Activated T-helper 2 cell treated with anti-CD3 and anti-CD28 coated beads, Interferon-gamma antibody, Interleukin-2, Interleukin-4, amounts not matched to agents 10 μg/mL and 5 μg/mL and 100 μg/mL, durations not matched to agents 14 hours and 24 hours and 36 hours (primary cell): ENCODE measurements at regions of chr14 and their contacts with region 1.

Region 1: DNA sequence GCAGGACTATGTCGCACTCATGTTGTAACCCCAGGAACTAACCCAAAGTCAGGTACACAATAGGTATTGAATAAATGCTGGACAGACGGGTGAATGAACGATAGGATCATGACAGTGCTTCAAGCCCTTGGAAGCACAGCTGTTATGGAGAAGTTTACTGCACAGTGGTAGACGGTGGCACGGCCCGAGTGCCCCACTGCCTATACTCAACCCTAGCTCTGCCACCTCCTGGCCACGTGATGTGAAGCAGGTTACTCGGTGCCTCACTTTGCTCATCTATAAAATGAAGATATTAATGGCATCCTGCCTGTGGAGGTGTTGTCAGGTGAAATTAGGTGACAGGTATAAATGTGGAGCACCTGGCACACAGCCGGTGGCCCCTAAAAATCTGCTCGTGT is 5.8 kb downstream of the ASB2 start:
- DNase-seq: peak; percentile 43
- H3K4me3 Mint-ChIP-seq: peak overlapping the region; percentile 85
- H3K27ac Mint-ChIP-seq: peak overlapping the region; percentile 99
- H3K4me1 Mint-ChIP-seq: peaks cover 89% of the 10 kb centered on the region
- H3K27me3 Mint-ChIP-seq: no peaks in the 10 kb centered on the region

Region 2: DNA sequence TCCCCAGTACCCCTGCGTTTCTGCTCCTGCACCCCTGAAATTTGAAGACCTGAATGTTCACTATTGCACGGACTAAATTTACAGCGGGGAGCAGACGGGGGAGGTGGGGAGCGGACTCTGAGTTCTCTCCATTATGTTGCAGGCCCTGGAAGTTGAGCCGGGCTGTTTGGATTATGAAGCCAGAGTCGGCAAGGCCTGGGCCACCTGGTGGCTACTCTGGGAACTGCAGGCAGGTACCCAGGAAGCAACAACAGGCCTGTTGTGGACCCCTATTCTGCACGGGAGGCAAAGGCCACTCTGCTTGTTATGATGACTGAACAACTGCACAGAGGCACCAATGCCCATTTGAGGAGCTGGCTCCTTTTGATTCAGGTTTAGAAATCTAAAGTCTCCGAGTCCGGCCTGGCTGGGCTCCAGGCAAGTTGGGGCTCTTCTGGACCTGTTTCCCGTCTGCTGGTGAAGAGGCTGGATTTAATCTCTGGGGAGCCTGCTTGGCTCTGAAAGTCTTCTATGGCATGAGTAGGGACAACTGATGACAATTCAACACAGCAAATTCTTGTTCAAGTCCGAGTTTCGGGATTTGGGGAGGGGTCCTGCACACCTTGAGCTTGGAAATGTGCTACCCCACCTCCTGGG is 77.5 kb before region 1 on chr14:
- intact Hi-C with region 1: no loop called
- DNase-seq: peak; percentile 38
- H3K4me3 Mint-ChIP-seq: no peak overlapping the region
- H3K27ac Mint-ChIP-seq: no peak overlapping the region
- H3K4me1 Mint-ChIP-seq: no peaks in the 10 kb centered on the region
- H3K27me3 Mint-ChIP-seq: peaks cover 6% of the 10 kb centered on the region

Region 3: GRCh38 chr14:93939304-93940229 is 31.0 kb before region 1 on chr14:
- intact Hi-C with region 1: loop called (anchors 1 kb)
- DNase-seq: peak; percentile 86
- H3K4me3 Mint-ChIP-seq: peak overlapping the region; percentile 49
- H3K27ac Mint-ChIP-seq: peak overlapping the region; percentile 67
- H3K4me1 Mint-ChIP-seq: peaks cover 18% of the 10 kb centered on the region
- H3K27me3 Mint-ChIP-seq: no peaks in the 10 kb centered on the region

Region 4: DNA sequence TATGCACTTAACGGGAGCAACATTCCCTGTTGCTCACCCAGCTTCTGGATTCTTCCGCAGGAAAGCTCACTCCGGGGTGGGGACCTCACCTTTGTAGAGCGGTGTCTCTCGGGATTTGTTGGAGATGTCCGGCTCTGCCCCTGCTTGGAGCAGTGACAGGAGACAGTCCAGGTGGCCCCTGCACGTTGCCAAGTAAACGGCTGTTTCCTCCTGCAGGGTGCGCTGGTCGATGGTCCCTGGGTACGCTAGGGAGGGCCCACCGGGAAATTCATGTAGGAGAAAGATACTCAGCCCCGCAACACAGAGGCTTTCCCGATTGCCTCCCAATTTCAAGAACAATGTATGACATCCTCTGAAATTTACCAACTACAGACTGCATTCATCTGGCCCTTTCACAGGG is 17.3 kb before region 1 on chr14:
- intact Hi-C with region 1: no loop called
- DNase-seq: no peak
- H3K4me3 Mint-ChIP-seq: no peak overlapping the region
- H3K27ac Mint-ChIP-seq: peak overlapping the region; percentile 23
- H3K4me1 Mint-ChIP-seq: peaks cover 69% of the 10 kb centered on the region
- H3K27me3 Mint-ChIP-seq: no peaks in the 10 kb centered on the region

Region 5: DNA sequence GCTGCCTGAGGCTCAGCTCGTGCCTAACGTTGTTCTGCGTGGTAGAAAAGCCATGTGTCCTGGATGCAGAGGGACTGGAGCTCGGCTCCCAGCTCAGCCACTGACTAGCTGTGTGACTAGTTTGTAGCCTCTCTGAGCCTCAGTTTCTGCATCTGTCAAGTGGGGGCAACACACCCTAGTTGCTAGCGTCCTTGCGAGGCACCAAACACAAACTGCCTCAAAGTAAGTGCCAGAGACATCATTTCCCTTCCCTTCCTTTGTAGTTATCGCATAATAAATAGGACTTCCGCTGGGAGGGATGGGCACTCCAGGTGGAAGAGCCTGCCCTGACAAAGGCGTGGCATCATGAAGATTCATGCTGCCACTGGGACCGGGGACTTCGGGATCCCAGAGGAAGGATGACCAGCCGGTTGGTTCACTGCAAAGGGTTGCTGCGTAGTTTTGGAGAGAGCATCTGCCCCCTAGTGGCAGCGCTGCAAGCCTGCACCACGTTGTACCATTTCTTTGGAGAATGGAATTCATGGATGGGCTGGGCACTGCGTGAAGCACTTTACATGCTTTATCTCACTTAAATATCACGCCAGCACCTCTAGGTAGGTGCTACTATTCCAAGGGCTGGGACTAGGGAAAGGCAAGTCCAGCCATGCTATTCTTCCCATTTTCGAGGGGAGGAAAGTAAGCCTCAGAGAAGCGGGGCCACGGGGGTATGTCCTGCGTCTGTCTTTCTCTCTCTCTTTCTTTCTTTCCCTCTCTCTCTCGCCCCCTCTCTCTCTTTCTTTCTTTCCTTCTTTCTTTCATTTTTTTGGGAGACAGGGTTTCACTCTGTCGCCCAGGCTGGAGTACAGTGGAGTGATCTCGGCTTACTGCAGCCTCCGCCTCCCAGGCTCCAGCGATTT is 31.2 kb after region 1 on chr14:
- intact Hi-C with region 1: loop called (anchors 2 kb)
- DNase-seq: peak; percentile 52
- H3K4me3 Mint-ChIP-seq: no peak overlapping the region
- H3K27ac Mint-ChIP-seq: peak overlapping the region; percentile 47
- H3K4me1 Mint-ChIP-seq: peaks cover 40% of the 10 kb centered on the region
- H3K27me3 Mint-ChIP-seq: no peaks in the 10 kb centered on the region

Region 6: GRCh38 chr14:94239406-94239805 is 268.9 kb after region 1 on chr14:
- intact Hi-C with region 1: no loop called
- DNase-seq: no peak
- H3K4me3 Mint-ChIP-seq: no peak overlapping the region
- H3K27ac Mint-ChIP-seq: no peak overlapping the region
- H3K4me1 Mint-ChIP-seq: peaks cover 12% of the 10 kb centered on the region
- H3K27me3 Mint-ChIP-seq: peaks cover 2% of the 10 kb centered on the region

Region 7: GRCh38 chr14:94392510-94392935 is 422.0 kb after region 1 on chr14:
- intact Hi-C with region 1: loop called (anchors 10 kb)
- DNase-seq: peak; percentile 33
- H3K4me3 Mint-ChIP-seq: no peak overlapping the region
- H3K27ac Mint-ChIP-seq: no peak overlapping the region
- H3K4me1 Mint-ChIP-seq: peaks cover 45% of the 10 kb centered on the region
- H3K27me3 Mint-ChIP-seq: no peaks in the 10 kb centered on the region

Region 8: DNA sequence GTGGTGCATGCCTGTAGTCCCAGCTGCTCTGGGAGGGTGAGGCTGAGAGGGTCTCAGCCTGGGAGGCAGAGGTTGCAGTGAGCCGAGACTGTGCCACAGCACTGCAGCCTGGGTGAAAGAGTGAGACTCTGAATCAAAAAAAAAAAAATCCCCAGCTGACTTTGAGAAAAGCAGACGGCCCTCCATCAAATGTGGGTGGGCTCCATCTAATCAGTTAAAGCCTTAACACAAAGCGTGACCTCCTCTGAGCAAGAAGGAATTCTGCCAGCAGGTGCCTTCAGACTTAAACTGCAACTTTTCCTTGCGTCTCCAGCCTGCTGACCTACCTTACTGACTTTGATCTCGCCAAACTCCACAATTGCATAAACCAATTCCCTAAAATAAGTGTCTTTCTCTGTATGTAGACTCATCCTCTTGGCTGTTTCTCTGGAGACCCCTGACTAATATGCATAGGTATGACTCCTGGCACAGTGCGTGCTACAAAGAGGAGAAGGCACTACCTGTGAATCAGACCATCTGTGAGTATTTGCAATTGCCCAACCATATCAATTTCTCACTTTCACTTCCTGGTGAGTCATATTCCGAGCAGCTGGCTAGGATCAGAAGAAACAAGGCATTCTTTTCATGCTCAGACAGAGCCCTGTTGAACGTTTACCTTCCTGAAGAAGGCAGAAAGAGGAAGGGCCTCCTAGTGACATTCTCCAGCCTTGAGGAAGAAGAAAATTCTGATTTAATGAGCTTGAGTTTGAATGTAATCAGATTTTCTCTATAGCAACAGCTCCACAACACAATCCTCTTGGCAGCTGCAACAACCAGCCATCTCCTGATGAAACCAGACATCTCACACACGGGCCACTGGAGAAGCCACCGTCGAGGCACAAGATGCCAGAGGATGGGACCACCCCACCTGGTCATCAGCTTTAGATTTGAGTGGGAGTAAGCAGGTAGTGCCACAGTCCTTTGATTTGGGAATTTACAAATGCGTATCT is 1294.9 kb after region 1 on chr14:
- intact Hi-C with region 1: loop called (anchors 10 kb)
- DNase-seq: peak; percentile 43
- H3K4me3 Mint-ChIP-seq: no peak overlapping the region
- H3K27ac Mint-ChIP-seq: peak overlapping the region; percentile 2
- H3K4me1 Mint-ChIP-seq: peaks cover 44% of the 10 kb centered on the region
- H3K27me3 Mint-ChIP-seq: peaks cover 2% of the 10 kb centered on the region